Esophagus muscularis mucosa (tissue), 4 donors: ENCODE measurements at regions of chr18 and their contacts with region 1.

Region 1: DNA sequence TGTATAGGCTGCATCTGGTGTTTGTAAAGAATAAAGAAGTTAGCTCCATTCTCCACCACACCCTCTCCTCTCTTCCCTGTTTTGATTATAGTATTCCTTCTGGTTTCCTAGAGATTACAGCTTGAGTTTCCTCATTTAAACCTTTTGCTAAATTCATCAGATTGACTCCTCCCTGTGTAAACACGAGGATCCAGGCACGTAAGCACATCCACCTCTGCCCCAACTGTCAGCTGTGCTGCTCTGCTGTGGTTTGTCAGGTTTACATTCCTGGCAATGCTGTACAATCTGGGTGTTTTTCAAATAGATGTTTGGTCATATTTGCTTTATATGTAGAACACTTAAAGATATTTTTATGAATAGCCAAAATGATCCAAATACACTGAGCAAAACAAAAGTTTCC is 302.8 kb downstream of the PTGR3 start:
- DNase-seq: no peak
- H3K4me3 ChIP-seq: no peak overlapping the region
- H3K27ac ChIP-seq: no peak overlapping the region
- H3K4me1 ChIP-seq: peaks cover 0 to 14% (median 8%) of the 10 kb centered on the region in 4 donors
- H3K27me3 ChIP-seq: no peaks in the 10 kb centered on the region
- CTCF ChIP-seq: no peak
- EP300 ChIP-seq: no peak
- POLR2A ChIP-seq: no peak

Region 2: GRCh38 chr18:74795751-74796150 is 110.4 kb before region 1 on chr18:
- intact Hi-C with region 1: no loop called
- DNase-seq: no peak
- H3K4me3 ChIP-seq: no peak overlapping the region
- H3K27ac ChIP-seq: no peak overlapping the region
- H3K4me1 ChIP-seq: peaks cover 5 to 26% (median 21%) of the 10 kb centered on the region in 4 donors
- H3K27me3 ChIP-seq: no peaks in the 10 kb centered on the region
- CTCF ChIP-seq: no peak
- EP300 ChIP-seq: no peak
- POLR2A ChIP-seq: no peak

Region 3: DNA sequence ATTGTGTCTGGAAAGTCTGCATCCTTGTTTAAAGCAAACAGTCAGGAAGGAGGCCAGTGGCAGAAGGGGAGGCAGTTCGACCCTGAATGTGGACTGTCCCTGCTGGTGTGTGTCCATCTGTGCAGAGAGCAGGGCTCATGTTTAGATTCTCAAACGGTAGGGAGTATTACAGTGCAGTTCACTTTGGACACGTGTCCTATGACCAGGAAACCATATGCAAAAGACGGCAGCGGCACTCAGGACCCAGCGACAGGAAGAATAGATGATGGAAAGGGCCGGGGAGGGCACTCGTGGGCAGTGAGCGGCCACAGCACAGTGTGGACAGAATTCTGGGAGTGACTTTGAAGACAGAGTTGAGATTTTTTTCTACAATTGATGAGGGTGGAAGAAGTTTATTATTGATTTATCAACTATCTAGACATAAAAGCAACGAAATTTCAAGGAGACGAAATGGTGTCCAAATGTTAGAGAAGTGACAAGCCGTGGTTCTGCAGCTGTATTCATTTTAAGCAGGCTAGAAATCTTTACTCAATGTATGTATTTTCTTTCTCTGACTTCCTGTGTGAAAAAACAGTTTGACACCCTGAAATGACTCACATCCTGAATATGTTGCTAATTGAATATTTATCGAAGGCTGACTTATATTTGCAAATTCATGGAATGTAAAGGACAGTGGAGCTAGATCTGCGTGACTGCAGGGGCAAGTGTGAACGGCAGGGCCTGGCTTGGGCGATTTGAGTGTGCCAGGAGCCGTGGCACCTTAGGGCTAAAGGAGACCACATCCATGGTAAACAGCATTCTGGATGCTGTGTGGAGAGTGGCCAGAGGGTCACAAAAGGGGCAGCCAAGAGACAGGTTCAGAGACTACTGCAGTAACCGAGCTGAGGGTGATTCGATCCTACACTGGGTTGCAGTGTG is 88.6 kb after region 1 on chr18:
- intact Hi-C with region 1: loop called (anchors 10 kb)
- DNase-seq: no peak
- H3K4me3 ChIP-seq: no peak overlapping the region
- H3K27ac ChIP-seq: no peak overlapping the region
- H3K4me1 ChIP-seq: no peaks in the 10 kb centered on the region
- H3K27me3 ChIP-seq: no peaks in the 10 kb centered on the region
- CTCF ChIP-seq: no peak
- EP300 ChIP-seq: no peak
- POLR2A ChIP-seq: no peak

Region 4: GRCh38 chr18:75041586-75041985 is 135.4 kb after region 1 on chr18:
- intact Hi-C with region 1: loop called (anchors 10 kb)
- DNase-seq: peak; percentile 74
- H3K4me3 ChIP-seq: no peak overlapping the region
- H3K27ac ChIP-seq: no peak overlapping the region
- H3K4me1 ChIP-seq: peaks cover 0 to 18% (median 17%) of the 10 kb centered on the region in 4 donors
- H3K27me3 ChIP-seq: no peaks in the 10 kb centered on the region
- CTCF ChIP-seq: peak in 2 of 3 experiments; percentile 24 to 31
- EP300 ChIP-seq: no peak
- POLR2A ChIP-seq: no peak